Activated naive CD4-positive, alpha-beta T cell treated with anti-CD3 and anti-CD28 coated beads for 36 hours (primary cell): ENCODE measurements at regions of chr4 and their contacts with region 1.

Region 1: GRCh38 chr4:15655229-15656037 is at the start of gene FBXL5:
- DNase-seq: peak; percentile 79
- H3K4me3 Mint-ChIP-seq: peak within 1 kb of the TSS; percentile 99
- H3K27ac Mint-ChIP-seq: peak within 1 kb of the TSS; percentile 96
- H3K4me1 Mint-ChIP-seq: peaks cover 68% of the 10 kb centered on the region
- H3K27me3 Mint-ChIP-seq: no peaks in the 10 kb centered on the region
- total RNA-seq, gene FBXL5: 30.8 to 31.0 TPM

Region 2: GRCh38 chr4:15396157-15396800 is 259.2 kb before region 1 on chr4:
- CTCF ChIA-PET with region 1: interaction called, 3 read pairs
- intact Hi-C with region 1: loop called (anchors 1 kb)
- DNase-seq: peak; percentile 79
- H3K4me3 Mint-ChIP-seq: no peak overlapping the region
- H3K27ac Mint-ChIP-seq: no peak overlapping the region
- H3K4me1 Mint-ChIP-seq: peaks cover 26% of the 10 kb centered on the region
- H3K27me3 Mint-ChIP-seq: no peaks in the 10 kb centered on the region

Region 3: DNA sequence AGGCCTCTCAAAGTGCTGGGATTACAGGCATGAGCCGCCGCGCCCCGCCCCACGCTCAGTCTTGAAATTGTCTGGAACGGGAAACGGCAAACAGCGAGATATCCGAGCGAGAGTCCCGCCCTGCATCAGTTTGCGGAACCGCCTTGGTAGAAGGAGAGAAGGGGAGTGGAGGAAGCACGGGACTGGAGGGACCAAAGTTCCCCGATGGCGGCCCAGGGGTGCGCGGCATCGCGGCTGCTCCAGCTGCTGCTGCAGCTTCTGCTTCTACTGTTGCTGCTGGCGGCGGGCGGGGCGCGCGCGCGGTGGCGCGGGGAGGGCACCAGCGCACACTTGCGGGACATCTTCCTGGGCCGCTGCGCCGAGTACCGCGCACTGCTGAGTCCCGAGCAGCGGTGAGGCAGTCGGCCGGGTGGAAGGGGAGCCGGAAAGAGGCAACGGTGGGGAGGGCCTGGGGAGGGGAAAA is 47.5 kb after region 1 on chr4 and contains the start of gene BST1:
- CTCF ChIA-PET with region 1: no interaction called
- intact Hi-C with region 1: loop called (anchors 1 kb)
- DNase-seq: peak; percentile 80
- H3K4me3 Mint-ChIP-seq: peak within 1 kb of the TSS; percentile 82
- H3K27ac Mint-ChIP-seq: no peak within 1 kb of the TSS
- H3K4me1 Mint-ChIP-seq: peaks cover 12% of the 10 kb centered on the region
- H3K27me3 Mint-ChIP-seq: peaks cover 15% of the 10 kb centered on the region
- total RNA-seq, gene BST1: 0.74 to 0.96 TPM

Region 4: GRCh38 chr4:15771216-15772058 is 116.0 kb after region 1 on chr4:
- CTCF ChIA-PET with region 1: no interaction called
- intact Hi-C with region 1: loop called (anchors 2 kb)
- DNase-seq: peak; percentile 57
- H3K4me3 Mint-ChIP-seq: peak overlapping the region; percentile 41
- H3K27ac Mint-ChIP-seq: no peak overlapping the region
- H3K4me1 Mint-ChIP-seq: peaks cover 69% of the 10 kb centered on the region
- H3K27me3 Mint-ChIP-seq: peaks cover 8% of the 10 kb centered on the region

Region 5: DNA sequence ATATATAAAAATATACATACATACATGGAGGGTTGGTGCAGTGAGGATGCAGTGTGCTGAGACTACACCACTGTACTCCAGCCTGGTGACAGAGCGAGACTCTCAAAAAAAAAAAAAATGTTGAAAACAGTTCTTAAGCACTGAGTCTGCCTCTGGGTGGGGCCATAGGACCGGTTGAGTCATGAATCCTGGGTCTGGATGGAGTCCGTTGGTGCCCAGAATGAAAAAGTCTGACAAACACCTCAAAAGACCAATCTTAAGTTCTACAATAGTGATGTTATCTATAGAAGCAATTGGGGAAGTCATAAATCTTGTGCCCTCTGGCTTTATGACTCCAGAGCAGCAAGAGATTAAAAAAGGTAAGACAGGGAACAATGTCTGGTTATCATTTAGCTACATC is 212.7 kb after region 1 on chr4:
- CTCF ChIA-PET with region 1: no interaction called
- intact Hi-C with region 1: no loop called
- DNase-seq: peak; percentile 35
- H3K4me3 Mint-ChIP-seq: no peak overlapping the region
- H3K27ac Mint-ChIP-seq: no peak overlapping the region
- H3K4me1 Mint-ChIP-seq: peaks cover 1% of the 10 kb centered on the region
- H3K27me3 Mint-ChIP-seq: no peaks in the 10 kb centered on the region

Region 6: DNA sequence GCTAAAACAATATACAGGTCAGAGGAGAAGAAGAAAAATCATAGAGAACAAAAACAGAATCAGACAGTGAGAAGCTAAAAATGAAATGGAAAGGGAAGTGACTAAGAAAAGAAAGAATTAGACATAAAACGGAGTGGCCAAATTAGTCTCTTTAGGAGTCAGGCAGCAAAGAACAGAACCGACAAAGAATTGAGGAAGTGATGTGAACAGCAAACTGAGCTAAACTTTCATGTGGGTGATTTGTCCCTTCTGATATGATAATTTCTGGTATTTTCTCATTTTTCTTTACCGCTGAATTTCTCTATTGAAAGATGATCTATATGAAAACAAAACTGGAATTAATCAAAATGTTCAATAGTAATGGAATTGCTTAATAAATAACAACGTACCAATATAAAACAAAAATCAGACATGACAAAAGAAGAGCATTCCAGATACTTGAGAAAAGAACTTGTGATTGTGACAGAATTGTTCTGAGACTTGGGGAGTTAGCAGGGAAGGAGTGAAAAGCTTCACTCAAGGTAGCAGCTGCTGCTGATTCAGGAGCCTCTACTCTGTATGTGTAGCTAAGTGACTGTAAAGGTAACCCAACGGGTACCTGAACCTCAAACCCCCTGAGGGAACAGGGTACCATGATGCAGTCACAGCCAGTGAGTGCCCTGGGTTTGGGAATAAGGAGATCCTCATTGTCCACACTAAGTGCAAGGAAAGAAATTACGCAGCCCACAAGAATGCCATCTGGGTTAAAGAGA is 562.0 kb after region 1 on chr4:
- CTCF ChIA-PET with region 1: no interaction called
- intact Hi-C with region 1: loop called (anchors 5 kb)
- DNase-seq: peak; percentile 10
- H3K4me3 Mint-ChIP-seq: peak overlapping the region; percentile 13
- H3K27ac Mint-ChIP-seq: peak overlapping the region; percentile 74
- H3K4me1 Mint-ChIP-seq: peaks cover 75% of the 10 kb centered on the region
- H3K27me3 Mint-ChIP-seq: no peaks in the 10 kb centered on the region